ENCODE measurements at regions of chr2 and their contacts with region 1.

Region 1: DNA sequence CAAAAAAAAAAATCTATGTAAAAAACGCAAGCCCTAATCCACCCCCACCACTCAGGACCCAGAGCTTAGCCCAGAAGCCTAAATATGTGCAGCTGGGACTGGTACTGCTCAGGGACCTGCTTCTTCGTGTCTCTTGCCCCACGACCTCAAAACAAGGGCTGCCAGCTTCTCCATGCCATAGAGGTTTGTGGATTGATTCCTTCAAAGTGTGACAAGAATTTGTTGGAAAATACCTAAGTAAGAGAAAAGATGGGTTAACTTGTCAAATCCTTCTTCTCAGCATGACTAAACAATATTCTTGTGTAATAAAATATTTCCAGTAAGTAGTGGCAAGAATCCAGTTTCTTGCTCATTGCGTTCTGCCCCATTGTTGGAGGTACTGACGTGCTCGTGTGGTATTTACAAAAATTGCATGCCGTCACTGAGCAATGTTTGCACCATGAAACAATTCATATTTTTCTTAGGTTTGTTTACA is 825 bp upstream of the SCYGR1 start:
- DNase-seq: peak; percentile 98
- H3K4me3 ChIP-seq: no peak overlapping the region
- H3K27ac ChIP-seq: peak overlapping the region; percentile 84
- H3K4me1 ChIP-seq: peaks cover 4% of the 10 kb centered on the region
- H3K27me3 ChIP-seq: no peaks in the 10 kb centered on the region
- CTCF ChIP-seq: no peak

Region 2: GRCh38 chr2:227324995-227325838 is 63.4 kb before region 1 on chr2 and contains the start of gene MFF:
- CTCF ChIA-PET with region 1: no interaction called
- dilution Hi-C with region 1: no loop called
- in situ Hi-C with region 1: no loop called
- intact Hi-C with region 1: loop called (anchors 2 kb)
- DNase-seq: peak; percentile 91
- H3K4me3 ChIP-seq: peak within 1 kb of the TSS; percentile 69 to 89 (median 77)
- H3K27ac ChIP-seq: peak within 1 kb of the TSS; percentile 78
- H3K4me1 ChIP-seq: peaks cover 12% of the 10 kb centered on the region
- H3K27me3 ChIP-seq: no peaks in the 10 kb centered on the region
- CTCF ChIP-seq: peak; percentile 11 to 53
- total RNA-seq, gene MFF: 44.2 to 56.0 TPM